MCF 10A (cell line): ENCODE measurements at regions of chrX and their contacts with region 1.

Region 1: DNA sequence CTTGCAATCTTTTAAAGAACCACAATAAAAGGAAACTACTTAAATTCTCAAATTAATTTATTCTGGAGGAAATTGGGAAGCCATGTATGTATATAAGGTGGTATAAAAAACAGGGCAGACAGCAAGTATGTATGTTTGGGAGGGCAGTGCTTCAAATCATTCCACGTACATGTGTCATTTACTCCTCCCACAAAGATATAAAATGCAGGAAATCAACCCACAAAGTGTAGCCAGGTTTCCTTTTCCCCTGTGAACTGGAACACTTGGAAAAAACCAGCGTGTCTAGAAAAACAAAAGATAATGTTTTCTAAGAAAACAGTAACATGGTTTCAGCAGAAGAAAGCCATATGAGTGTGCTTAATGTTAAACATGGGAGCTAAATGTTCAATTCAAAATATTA is 156.7 kb upstream of the FAM47A start:
- DNase-seq: peak; percentile 5
- H3K4me3 Mint-ChIP-seq: no peak overlapping the region
- H3K27ac Mint-ChIP-seq: no peak overlapping the region
- H3K4me1 Mint-ChIP-seq: no peaks in the 10 kb centered on the region
- H3K27me3 Mint-ChIP-seq: peaks cover 10% of the 10 kb centered on the region
- CTCF ChIP-seq: no peak

Region 2: DNA sequence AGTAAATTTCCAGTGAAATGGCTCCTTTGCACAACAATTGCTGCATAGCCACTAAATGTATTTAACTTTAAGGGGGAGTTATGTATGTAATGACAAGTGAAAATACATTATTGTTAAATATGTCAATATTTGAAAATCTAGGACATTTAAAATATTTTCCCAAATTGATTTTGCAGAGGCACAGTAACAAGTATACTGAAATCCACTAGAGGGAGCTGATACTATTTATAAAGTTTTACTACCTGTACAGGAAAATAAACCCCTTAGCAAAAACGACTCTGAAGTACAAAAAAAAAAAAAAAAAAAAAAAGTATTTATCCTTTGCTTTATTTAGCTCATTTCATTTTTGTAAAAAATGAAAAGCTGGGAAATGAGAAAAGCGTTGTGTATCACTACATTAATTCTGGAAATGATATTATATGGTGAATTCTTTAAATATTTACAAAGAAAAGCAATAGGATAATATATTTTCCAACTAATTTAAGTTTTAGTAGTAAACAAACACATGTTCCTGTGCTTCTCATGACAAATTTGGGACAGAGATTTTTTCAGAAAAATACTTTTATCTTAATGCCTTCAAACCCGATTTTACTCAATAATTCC is 1805.1 kb before region 1 on chrX:
- CTCF ChIA-PET with region 1: interaction called, 4 read pairs
- POLR2A ChIA-PET with region 1: no interaction called
- intact Hi-C with region 1: loop called (anchors 10 kb)
- DNase-seq: no peak
- H3K4me3 Mint-ChIP-seq: no peak overlapping the region
- H3K27ac Mint-ChIP-seq: no peak overlapping the region
- H3K4me1 Mint-ChIP-seq: no peaks in the 10 kb centered on the region
- H3K27me3 Mint-ChIP-seq: peaks cover 27% of the 10 kb centered on the region
- CTCF ChIP-seq: peak; percentile 33

Region 3: GRCh38 chrX:34483980-34484379 is 195.2 kb after region 1 on chrX:
- CTCF ChIA-PET with region 1: no interaction called
- POLR2A ChIA-PET with region 1: no interaction called
- intact Hi-C with region 1: no loop called
- DNase-seq: no peak
- H3K4me3 Mint-ChIP-seq: no peak overlapping the region
- H3K27ac Mint-ChIP-seq: no peak overlapping the region
- H3K4me1 Mint-ChIP-seq: no peaks in the 10 kb centered on the region
- H3K27me3 Mint-ChIP-seq: peaks cover 12% of the 10 kb centered on the region
- CTCF ChIP-seq: no peak